Naive thymus-derived CD4-positive, alpha-beta T cell (primary cell): ENCODE measurements at regions of chr14 and their contacts with region 1.

Region 1: DNA sequence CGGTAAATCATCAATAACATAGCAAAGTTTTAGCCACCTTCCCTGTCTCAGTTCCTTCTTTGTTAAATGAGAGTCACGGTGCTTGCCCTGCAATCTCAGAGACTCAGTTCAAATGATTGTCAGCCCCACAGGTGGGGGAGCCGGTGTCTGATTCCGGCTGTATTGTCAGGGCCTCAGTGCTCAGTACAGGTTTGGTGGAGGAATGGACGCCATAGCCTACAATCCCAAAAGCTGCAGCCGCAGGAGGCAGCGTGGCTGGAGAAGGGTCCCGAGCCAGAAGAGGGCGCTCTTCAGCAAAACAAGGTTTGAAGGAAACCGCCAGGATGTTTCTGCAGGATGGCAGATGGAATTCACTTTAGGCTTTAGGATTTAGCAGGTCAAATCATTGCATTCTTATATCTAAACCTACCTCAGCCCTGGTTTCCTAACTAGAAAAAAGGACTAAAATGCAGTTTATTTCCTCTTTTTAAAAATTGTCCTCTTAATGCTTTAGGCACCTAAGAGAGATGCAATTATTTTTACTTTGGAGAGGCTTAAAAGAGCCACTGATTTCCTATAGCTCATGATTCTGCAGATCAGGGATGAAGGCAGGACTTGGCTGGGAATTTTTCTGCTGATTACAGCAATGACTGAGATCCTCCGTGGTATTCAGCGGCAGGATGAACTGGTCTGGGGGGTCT is 29.2 kb downstream of the FOS start:
- DNase-seq: peak; percentile 36 to 76 (median 59)
- ATAC-seq: peak; percentile 75
- H3K4me3 ChIP-seq: no peak overlapping the region
- H3K4me3 Mint-ChIP-seq: no peak overlapping the region
- H3K27ac ChIP-seq: no peak overlapping the region
- H3K27ac Mint-ChIP-seq: peak overlapping the region in 1 of 9 donors; percentile 20
- H3K4me1 ChIP-seq: peaks cover 0 to 3% of the 10 kb centered on the region in 2 donors
- H3K4me1 Mint-ChIP-seq: peaks cover 4 to 25% (median 11%) of the 10 kb centered on the region in 7 donors
- H3K27me3 ChIP-seq: no peaks in the 10 kb centered on the region
- H3K27me3 Mint-ChIP-seq: peaks cover 0 to 6% (median 0%) of the 10 kb centered on the region in 5 donors

Region 2: DNA sequence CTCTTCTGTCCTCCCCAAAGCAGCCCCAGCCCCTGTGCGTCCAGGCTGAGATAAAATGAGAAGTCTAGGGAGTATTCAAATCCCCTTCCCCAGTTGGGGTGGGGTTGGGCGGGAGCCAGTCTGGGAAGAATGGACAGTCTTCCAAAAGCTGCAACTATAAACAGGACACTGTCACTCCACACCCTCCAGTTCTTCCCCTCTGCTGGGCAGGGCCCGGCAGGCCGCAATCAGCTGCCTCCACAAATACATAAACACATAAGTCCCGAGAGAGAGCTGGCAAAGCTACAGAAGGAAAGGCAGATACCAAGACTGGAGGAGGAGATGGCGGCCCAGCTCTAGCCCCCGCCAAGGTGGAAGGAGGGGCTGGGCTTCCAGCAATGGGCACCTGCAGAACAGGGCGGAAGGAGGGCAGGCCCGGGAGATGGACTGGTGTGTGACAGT is 708.5 kb before region 1 on chr14:
- CTCF ChIA-PET with region 1: no interaction called
- POLR2A ChIA-PET with region 1: no interaction called
- intact Hi-C with region 1: no loop called
- DNase-seq: no peak
- ATAC-seq: no peak
- H3K4me3 ChIP-seq: no peak overlapping the region
- H3K4me3 Mint-ChIP-seq: no peak overlapping the region
- H3K27ac ChIP-seq: no peak overlapping the region
- H3K27ac Mint-ChIP-seq: no peak overlapping the region
- H3K4me1 ChIP-seq: no peaks in the 10 kb centered on the region
- H3K4me1 Mint-ChIP-seq: no peaks in the 10 kb centered on the region
- H3K27me3 ChIP-seq: no peaks in the 10 kb centered on the region
- H3K27me3 Mint-ChIP-seq: peaks cover 0 to 4% (median 0%) of the 10 kb centered on the region in 5 donors

Region 3: DNA sequence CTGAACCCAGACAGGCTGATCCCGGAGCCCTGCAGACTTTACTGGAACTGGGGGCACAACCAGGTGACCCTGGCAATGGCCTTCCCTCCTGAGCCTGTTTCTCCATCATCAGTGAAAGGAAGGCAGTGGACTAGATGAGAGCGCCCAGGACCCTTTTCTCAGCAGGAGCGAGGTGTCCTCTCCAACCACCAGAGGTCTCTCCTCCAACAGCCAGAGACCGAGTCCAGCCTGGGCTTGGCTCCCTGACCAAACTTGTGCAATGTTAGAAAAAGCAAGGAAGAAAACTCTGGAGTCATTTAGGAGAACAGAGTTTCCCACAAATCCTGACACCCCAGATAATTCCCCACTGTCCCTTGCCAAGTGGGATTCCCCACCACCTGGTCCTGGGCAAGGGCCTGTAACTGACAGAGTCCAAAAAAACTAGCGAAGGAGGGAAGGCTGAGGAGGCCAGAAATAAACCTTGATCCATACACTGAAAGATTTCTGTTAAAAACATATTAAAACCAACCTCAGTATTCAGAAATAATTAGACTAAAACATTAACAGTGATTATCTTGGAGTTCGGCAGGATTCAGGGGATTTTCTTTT is 393.8 kb before region 1 on chr14:
- CTCF ChIA-PET with region 1: no interaction called
- POLR2A ChIA-PET with region 1: no interaction called
- intact Hi-C with region 1: loop called in 1 of 2 experiments (anchors 1 kb)
- DNase-seq: no peak
- ATAC-seq: no peak
- H3K4me3 ChIP-seq: no peak overlapping the region
- H3K4me3 Mint-ChIP-seq: no peak overlapping the region
- H3K27ac ChIP-seq: no peak overlapping the region
- H3K27ac Mint-ChIP-seq: no peak overlapping the region
- H3K4me1 ChIP-seq: no peaks in the 10 kb centered on the region
- H3K4me1 Mint-ChIP-seq: peaks cover 0 to 3% (median 0%) of the 10 kb centered on the region in 7 donors
- H3K27me3 ChIP-seq: no peaks in the 10 kb centered on the region
- H3K27me3 Mint-ChIP-seq: no peaks in the 10 kb centered on the region

Region 4: GRCh38 chr14:75132382-75133086 is 175.3 kb before region 1 on chr14:
- CTCF ChIA-PET with region 1: interaction called, 18 read pairs
- POLR2A ChIA-PET with region 1: interaction called, 4 read pairs
- intact Hi-C with region 1: loop called (anchors 1 kb)
- DNase-seq: peak in 7 of 9 donors; percentile 49 to 78 (median 72)
- ATAC-seq: peak; percentile 93
- H3K4me3 ChIP-seq: no peak overlapping the region
- H3K4me3 Mint-ChIP-seq: no peak overlapping the region
- H3K27ac ChIP-seq: no peak overlapping the region
- H3K27ac Mint-ChIP-seq: peak overlapping the region in 5 of 9 donors; percentile 19 to 83 (median 65)
- H3K4me1 ChIP-seq: peaks cover 0 to 3% of the 10 kb centered on the region in 2 donors
- H3K4me1 Mint-ChIP-seq: peaks cover 8 to 24% (median 20%) of the 10 kb centered on the region in 7 donors
- H3K27me3 ChIP-seq: no peaks in the 10 kb centered on the region
- H3K27me3 Mint-ChIP-seq: no peaks in the 10 kb centered on the region

Region 5: GRCh38 chr14:75230140-75231045 is 77.4 kb before region 1 on chr14:
- CTCF ChIA-PET with region 1: interaction called, 4 read pairs
- POLR2A ChIA-PET with region 1: no interaction called
- intact Hi-C with region 1: loop called in 1 of 2 experiments (anchors 1 kb)
- DNase-seq: peak in 6 of 9 donors; percentile 26 to 50 (median 41)
- ATAC-seq: peak; percentile 59
- H3K4me3 ChIP-seq: no peak overlapping the region
- H3K4me3 Mint-ChIP-seq: peak overlapping the region; percentile 3 to 79 (median 50)
- H3K27ac ChIP-seq: no peak overlapping the region
- H3K27ac Mint-ChIP-seq: peak overlapping the region; percentile 42 to 96 (median 73)
- H3K4me1 ChIP-seq: peaks cover 33 to 41% of the 10 kb centered on the region in 2 donors
- H3K4me1 Mint-ChIP-seq: peaks cover 43 to 75% (median 66%) of the 10 kb centered on the region in 7 donors
- H3K27me3 ChIP-seq: no peaks in the 10 kb centered on the region
- H3K27me3 Mint-ChIP-seq: peaks cover 0 to 22% (median 0%) of the 10 kb centered on the region in 5 donors

Region 6: GRCh38 chr14:75249251-75249957 is 58.4 kb before region 1 on chr14:
- CTCF ChIA-PET with region 1: no interaction called
- POLR2A ChIA-PET with region 1: no interaction called
- intact Hi-C with region 1: no loop called
- DNase-seq: peak; percentile 46 to 96 (median 93)
- ATAC-seq: peak; percentile 86
- H3K4me3 ChIP-seq: peak overlapping the region; percentile 48
- H3K4me3 Mint-ChIP-seq: peak overlapping the region; percentile 58 to 83 (median 67)
- H3K27ac ChIP-seq: peak overlapping the region; percentile 81
- H3K27ac Mint-ChIP-seq: peak overlapping the region; percentile 83 to 98 (median 96)
- H3K4me1 ChIP-seq: peaks cover 51 to 61% of the 10 kb centered on the region in 2 donors
- H3K4me1 Mint-ChIP-seq: peaks cover 39 to 81% (median 72%) of the 10 kb centered on the region in 7 donors
- H3K27me3 ChIP-seq: no peaks in the 10 kb centered on the region
- H3K27me3 Mint-ChIP-seq: peaks cover 0 to 57% (median 0%) of the 10 kb centered on the region in 5 donors

Region 7: DNA sequence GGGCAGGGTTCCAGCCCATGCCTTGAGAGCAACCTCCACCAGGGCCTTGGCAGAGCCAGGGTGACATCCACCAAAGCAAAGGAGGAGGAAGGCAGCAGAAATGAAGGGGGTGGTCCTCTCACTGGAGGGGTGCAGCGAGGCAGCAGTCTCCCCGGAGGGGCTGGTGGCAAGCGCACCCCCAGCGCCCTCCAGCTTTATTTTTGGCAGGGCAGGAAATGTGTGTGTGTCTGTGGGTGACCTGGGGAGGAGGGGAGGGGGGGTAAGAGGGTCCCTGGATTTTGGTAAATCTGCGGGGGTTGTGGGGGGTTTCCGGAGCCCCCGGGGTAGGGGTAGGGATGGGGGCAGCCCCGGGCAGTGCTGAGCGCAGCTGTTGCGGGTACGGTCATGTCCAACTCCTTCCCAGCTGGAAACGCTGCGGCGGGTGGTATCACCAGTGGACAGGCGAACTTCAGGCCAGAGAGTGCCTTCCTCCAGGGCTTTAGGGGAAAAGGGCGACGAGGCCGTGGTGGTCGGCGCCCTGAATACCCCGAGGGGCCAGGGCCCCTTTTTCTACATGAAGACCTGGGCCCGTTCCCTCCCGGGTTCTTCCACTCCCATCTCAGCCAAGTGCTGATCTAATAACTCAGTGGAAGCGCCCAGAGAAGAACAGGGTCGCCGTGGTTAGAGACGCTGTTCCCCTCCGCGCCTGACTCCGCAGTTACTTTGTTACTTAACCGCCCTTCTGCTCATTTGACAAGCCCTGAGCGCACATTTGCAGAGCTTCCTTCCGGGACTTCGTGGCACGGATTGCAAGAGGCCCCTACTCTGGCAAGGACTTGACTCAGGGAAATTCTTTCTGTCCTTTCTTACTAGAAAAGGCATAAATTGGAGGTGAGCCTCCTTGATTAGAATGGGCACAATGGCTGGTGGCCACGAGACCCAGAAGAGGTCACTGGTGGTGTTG is 26.0 kb after region 1 on chr14:
- CTCF ChIA-PET with region 1: interaction called, 4 read pairs
- POLR2A ChIA-PET with region 1: no interaction called
- intact Hi-C with region 1: loop called in 1 of 2 experiments (anchors 1 kb)
- DNase-seq: peak; percentile 36 to 80 (median 72)
- ATAC-seq: peak; percentile 94
- H3K4me3 ChIP-seq: peak overlapping the region; percentile 71
- H3K4me3 Mint-ChIP-seq: peak overlapping the region; percentile 84 to 93 (median 88)
- H3K27ac ChIP-seq: peak overlapping the region; percentile 77
- H3K27ac Mint-ChIP-seq: peak overlapping the region; percentile 90 to 99 (median 98)
- H3K4me1 ChIP-seq: peaks cover 12 to 14% of the 10 kb centered on the region in 2 donors
- H3K4me1 Mint-ChIP-seq: peaks cover 20 to 42% (median 28%) of the 10 kb centered on the region in 7 donors
- H3K27me3 ChIP-seq: no peaks in the 10 kb centered on the region
- H3K27me3 Mint-ChIP-seq: peaks cover 0 to 18% (median 0%) of the 10 kb centered on the region in 5 donors

Region 8: DNA sequence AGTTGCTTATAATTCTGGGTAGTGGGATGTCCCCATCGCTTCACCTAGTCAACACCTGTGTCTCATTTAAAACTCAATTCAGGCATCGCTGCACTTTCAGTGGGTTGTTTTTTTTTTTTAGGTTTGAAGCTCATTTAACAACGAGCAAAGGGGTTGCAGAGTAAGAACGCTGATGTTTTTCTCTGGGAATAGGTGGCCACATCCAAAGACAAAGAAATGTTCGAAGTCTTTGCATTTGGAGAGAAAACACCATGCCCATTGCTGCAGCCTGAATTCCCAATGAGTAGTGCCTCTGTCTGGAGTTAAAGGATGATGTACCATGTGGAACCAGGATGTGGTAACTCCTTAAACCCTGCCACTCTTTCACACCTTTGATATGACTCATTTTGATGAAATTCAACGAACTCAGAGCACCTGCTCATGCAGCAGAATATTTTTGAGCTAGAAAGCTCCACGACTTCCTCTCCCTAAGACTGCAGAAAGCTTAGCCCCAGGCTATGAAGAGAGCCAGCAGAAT is 179.4 kb after region 1 on chr14:
- CTCF ChIA-PET with region 1: interaction called, 21 read pairs
- POLR2A ChIA-PET with region 1: no interaction called
- intact Hi-C with region 1: loop called (anchors 1 kb)
- DNase-seq: no peak
- ATAC-seq: peak; percentile 20
- H3K4me3 ChIP-seq: no peak overlapping the region
- H3K4me3 Mint-ChIP-seq: peak overlapping the region in 1 of 10 donors; percentile 65
- H3K27ac ChIP-seq: no peak overlapping the region
- H3K27ac Mint-ChIP-seq: peak overlapping the region in 2 of 9 donors; percentile 38 to 47
- H3K4me1 ChIP-seq: peaks cover 0 to 9% of the 10 kb centered on the region in 2 donors
- H3K4me1 Mint-ChIP-seq: peaks cover 4 to 31% (median 8%) of the 10 kb centered on the region in 7 donors
- H3K27me3 ChIP-seq: no peaks in the 10 kb centered on the region
- H3K27me3 Mint-ChIP-seq: peaks cover 0 to 2% (median 0%) of the 10 kb centered on the region in 5 donors

Region 9: DNA sequence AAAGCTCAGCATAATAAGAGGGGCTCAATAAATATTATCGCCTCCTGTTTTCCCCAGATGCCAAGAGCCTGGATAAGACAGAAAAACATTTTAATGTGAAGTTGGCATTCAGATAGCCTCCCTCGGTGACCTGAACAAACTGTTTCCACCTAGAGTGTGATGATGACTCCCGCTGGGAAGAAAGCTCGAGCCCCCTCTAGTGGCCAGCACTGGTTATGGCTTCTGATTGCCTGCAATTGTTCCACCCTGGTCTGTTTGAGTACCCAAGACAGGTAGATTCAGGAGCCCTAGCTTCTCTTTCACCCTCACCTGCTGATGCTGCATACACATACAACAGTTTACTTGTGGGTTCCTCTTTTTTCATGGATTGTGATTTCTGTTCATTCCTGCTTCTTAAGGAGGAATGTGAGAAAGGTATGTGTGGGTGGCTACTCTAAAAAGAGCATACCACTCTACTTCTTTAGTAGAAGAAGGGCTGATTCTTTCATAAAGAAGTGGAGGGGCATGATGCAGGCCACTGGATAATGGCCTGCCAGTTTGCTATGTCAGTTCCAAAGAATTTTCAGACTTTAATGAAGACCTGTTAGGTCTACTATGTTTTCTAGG is 346.4 kb after region 1 on chr14:
- CTCF ChIA-PET with region 1: interaction called, 5 read pairs
- POLR2A ChIA-PET with region 1: no interaction called
- intact Hi-C with region 1: loop called (anchors 1 kb)
- DNase-seq: peak; percentile 60 to 83 (median 71)
- ATAC-seq: peak; percentile 97
- H3K4me3 ChIP-seq: no peak overlapping the region
- H3K4me3 Mint-ChIP-seq: no peak overlapping the region
- H3K27ac ChIP-seq: peak overlapping the region; percentile 14
- H3K27ac Mint-ChIP-seq: peak overlapping the region in 1 of 9 donors; percentile 20
- H3K4me1 ChIP-seq: no peaks in the 10 kb centered on the region
- H3K4me1 Mint-ChIP-seq: peaks cover 5 to 17% (median 10%) of the 10 kb centered on the region in 7 donors
- H3K27me3 ChIP-seq: no peaks in the 10 kb centered on the region
- H3K27me3 Mint-ChIP-seq: no peaks in the 10 kb centered on the region